AG04449 (cell line): ENCODE measurements at regions of chr4 and their contacts with region 1.

Region 1: GRCh38 chr4:83284193-83285054 is at the start of gene COQ2:
- DNase-seq: peak; percentile 67
- H3K4me3 ChIP-seq: peak within 1 kb of the TSS; percentile 66
- CTCF ChIP-seq: peak; percentile 45

Region 2: DNA sequence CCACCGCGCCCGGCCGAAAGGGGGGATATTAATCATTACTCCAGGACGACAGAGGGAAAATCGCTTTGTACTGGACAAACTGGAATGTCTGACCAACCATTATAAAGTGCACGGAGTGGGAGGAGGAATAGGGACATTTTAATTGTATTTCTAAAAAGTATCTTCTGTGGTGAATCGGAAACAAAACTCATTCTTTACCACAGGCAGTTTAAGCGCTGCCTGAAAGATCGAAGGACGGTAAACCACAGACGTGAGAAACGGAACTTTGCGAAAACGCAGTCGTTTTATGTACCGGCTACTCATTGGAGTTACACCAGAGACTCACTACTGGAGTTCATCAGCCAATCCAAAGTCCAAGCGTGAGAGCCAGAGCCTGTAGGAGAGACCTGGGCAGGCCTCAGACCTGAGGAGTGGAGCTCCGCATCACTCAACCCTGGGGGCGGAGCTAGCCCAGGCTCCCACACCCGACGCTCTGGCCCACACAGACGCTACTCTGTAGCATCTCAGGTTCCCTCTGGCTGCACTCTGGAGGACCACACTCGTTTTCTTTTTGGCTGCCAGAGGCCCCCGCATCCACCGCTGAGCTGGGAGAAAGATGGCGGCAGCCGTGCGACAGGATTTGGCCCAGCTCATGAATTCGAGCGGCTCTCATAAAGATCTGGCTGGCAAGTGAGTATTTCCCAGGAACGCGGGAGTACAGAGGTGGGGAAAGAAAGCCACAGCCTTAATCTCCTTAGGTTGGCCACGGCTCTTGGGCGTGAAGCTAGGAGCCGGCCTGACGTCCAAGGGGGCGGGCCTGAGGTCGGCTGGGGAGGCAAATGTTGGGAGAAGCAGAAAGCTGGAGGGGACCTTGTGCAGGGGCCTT is 249.6 kb before region 1 on chr4 and contains the start of gene COPS4:
- CTCF ChIA-PET with region 1: interaction called, 20 read pairs
- POLR2A ChIA-PET with region 1: interaction called, 12 read pairs
- DNase-seq: peak; percentile 99
- H3K4me3 ChIP-seq: peak within 1 kb of the TSS; percentile 92
- CTCF ChIP-seq: peak; percentile 45

Region 3: GRCh38 chr4:83062739-83063138 is 221.7 kb before region 1 on chr4:
- CTCF ChIA-PET with region 1: interaction called, 104 read pairs
- POLR2A ChIA-PET with region 1: no interaction called
- DNase-seq: no peak
- H3K4me3 ChIP-seq: no peak overlapping the region
- CTCF ChIP-seq: no peak

Region 4: GRCh38 chr4:83110223-83110945 is 174.0 kb before region 1 on chr4:
- CTCF ChIA-PET with region 1: interaction called, 15 read pairs
- POLR2A ChIA-PET with region 1: no interaction called
- DNase-seq: no peak
- H3K4me3 ChIP-seq: peak overlapping the region; percentile 55
- CTCF ChIP-seq: peak; percentile 89

Region 5: GRCh38 chr4:83267121-83267829 is 17.1 kb before region 1 on chr4:
- CTCF ChIA-PET with region 1: interaction called, 36 read pairs
- POLR2A ChIA-PET with region 1: no interaction called
- DNase-seq: no peak
- H3K4me3 ChIP-seq: no peak overlapping the region
- CTCF ChIP-seq: no peak

Region 6: GRCh38 chr4:83516042-83516772 is 231.8 kb after region 1 on chr4:
- CTCF ChIA-PET with region 1: no interaction called
- POLR2A ChIA-PET with region 1: no interaction called
- DNase-seq: peak; percentile 17
- H3K4me3 ChIP-seq: no peak overlapping the region
- CTCF ChIP-seq: no peak

Region 7: GRCh38 chr4:83618431-83618830 is 334.0 kb after region 1 on chr4:
- CTCF ChIA-PET with region 1: no interaction called
- POLR2A ChIA-PET with region 1: no interaction called
- DNase-seq: no peak
- H3K4me3 ChIP-seq: no peak overlapping the region
- CTCF ChIP-seq: no peak

Region 8: DNA sequence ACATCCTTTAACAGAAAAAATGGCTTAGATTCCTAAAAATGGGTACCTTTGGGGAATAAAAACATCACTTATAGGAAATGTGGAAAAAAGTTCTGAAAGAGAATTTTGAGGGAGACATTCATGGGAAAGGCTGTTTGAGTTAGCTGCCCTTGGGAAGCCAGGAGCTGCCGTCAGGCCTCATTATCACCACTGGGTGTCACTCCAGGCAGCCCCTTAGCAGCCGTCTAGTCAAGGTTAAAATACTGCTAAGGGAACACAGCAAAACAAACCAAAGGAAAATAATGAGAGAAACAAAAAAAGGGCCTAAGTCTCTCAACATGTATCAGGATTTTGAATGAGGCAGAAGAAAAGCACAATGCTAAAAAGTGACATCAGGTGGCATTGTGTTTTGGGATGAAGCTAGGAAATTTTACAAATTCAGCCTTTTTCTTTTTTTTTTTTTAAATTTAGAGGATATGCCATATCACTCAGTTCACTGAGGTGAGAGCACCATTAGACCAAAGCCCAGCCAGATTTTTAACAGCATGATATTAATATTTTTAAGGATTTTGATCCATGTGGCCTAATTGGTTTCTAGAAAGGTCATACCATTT is 486.8 kb after region 1 on chr4:
- CTCF ChIA-PET with region 1: no interaction called
- POLR2A ChIA-PET with region 1: no interaction called
- DNase-seq: peak; percentile 24
- H3K4me3 ChIP-seq: no peak overlapping the region
- CTCF ChIP-seq: peak; percentile 84